Activated T-helper 1 cell treated with anti-CD3 and anti-CD28 coated beads, Interleukin-12 subunit alpha, Interleukin-12 subunit beta, Interleukin-2, Interleukin-4 antibody, amounts not matched to agents 30 ng/mL and 10 ng/mL and 1 ng/mL, durations not matched to agents 14 hours and 24 hours and 36 hours (primary cell): ENCODE measurements at regions of chr11 and their contacts with region 1.

Region 1: DNA sequence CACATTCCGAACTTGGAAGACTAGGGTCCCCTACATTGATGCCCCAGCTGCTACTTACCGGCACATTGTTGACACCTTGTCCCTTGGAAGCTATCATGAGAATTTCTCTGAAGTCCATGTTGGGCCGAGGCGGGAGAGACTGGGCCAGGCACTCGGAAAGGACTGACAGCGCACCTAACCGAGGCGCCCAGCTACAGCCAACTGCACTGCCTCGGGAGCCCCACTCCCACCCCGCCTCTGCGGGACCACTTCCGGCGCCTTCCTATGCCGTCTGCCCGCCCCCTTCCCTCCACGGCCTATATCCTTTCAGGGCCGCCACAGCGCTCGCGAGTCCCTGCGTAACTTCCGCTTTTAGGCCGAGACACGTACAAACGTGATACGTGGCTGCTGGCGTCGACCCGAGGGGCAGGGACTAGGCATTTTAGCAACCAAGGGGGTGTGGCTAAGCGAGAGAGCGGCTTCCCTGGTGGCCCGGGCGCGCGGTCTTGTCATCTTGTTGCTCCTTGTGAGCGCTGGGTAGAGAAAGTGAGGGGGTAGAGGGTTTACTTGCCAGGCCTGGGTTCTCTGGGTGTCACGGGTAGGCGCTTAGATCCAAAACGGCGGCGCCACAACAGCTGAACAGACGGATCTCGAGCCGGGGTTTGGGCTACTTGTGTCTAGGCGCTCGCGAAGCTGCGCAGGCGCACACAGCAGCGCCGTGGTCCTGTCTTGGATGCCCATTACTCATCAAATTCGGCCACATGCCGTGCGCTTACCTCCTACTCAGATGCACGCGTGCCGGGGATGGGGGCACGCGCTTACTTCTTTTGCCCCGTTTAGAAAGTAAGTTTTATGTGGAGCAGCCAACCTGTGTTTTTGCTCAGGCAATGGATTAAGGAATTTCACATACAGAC is at the start of gene SPTY2D1:
- DNase-seq: peak; percentile 97
- H3K4me3 Mint-ChIP-seq: peak within 1 kb of the TSS; percentile 97
- H3K27ac Mint-ChIP-seq: peak within 1 kb of the TSS; percentile 99
- H3K4me1 Mint-ChIP-seq: peaks cover 32% of the 10 kb centered on the region
- H3K27me3 Mint-ChIP-seq: no peaks in the 10 kb centered on the region
- total RNA-seq, gene SPTY2D1: 29.2 and 29.6 TPM in 2 replicates

Region 2: DNA sequence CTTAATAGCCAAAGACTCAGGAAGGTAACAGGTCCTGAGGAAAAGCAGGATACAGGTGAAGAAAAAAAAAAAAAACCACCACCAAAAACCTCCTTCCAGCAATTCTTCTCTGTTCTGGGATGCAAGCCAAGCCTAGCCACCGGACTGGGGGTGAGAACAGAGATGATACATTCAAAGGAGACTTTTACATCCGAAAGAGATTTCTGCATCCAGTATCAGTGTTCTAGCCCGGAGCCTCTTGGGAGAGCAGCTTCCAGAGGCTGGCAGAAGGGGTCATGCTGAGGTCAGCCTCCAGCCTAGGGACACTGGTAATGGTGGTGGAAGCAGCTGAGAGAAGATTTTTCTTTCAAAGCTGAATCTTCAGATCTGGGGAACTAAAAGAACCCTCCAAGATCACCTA is 823.6 kb before region 1 on chr11:
- intact Hi-C with region 1: no loop called
- DNase-seq: no peak
- H3K4me3 Mint-ChIP-seq: no peak overlapping the region
- H3K27ac Mint-ChIP-seq: no peak overlapping the region
- H3K4me1 Mint-ChIP-seq: no peaks in the 10 kb centered on the region
- H3K27me3 Mint-ChIP-seq: no peaks in the 10 kb centered on the region

Region 3: GRCh38 chr11:18012863-18013781 is 621.3 kb before region 1 on chr11 and contains the start of gene SERGEF:
- intact Hi-C with region 1: loop called (anchors 5 kb)
- DNase-seq: peak; percentile 92
- H3K4me3 Mint-ChIP-seq: peak within 1 kb of the TSS; percentile 97
- H3K27ac Mint-ChIP-seq: peak within 1 kb of the TSS; percentile 98
- H3K4me1 Mint-ChIP-seq: peaks cover 44% of the 10 kb centered on the region
- H3K27me3 Mint-ChIP-seq: peaks cover 5% of the 10 kb centered on the region
- total RNA-seq, gene SERGEF: 24.5 and 32.8 TPM in 2 replicates

Region 4: GRCh38 chr11:18383388-18384156 is 250.8 kb before region 1 on chr11:
- intact Hi-C with region 1: loop called (anchors 1 kb)
- DNase-seq: peak; percentile 53
- H3K4me3 Mint-ChIP-seq: peak overlapping the region; percentile 59
- H3K27ac Mint-ChIP-seq: peak overlapping the region; percentile 99
- H3K4me1 Mint-ChIP-seq: peaks cover 38% of the 10 kb centered on the region
- H3K27me3 Mint-ChIP-seq: no peaks in the 10 kb centered on the region

Region 5: DNA sequence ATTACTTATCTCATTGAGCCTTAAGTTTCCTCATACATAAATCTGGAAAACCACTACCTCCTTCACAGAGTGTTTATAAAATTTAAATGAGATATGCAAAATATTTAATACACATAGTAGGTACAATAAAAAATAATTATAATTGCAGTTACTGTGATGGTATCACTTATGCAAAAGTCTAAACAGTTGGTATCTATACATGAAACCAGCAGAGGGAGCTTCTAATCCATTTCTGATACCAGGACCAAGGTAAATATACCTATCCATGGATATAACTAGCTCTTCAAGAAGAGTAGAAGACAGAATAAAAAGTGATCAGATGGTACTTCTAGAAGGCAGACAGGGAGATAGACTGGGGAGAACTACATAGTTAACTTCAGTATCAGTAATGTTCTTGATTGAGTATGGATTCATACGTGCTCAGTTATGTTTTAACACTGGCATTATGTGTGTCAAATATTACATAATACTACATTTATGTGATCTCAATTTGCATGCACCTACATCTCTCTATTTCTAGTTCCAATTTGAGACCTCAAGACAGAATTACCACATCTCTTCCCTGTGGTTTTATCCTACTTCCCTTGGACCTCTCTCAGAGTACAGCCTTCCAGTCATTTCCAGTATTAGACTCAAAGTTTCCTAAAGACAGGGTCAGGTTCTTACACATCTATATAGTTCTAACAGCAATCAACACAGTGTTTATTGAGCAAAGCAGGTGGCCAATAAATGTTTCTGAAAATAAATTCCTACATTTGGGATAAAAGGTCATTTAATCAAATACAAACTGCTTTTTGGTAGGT is 94.0 kb before region 1 on chr11:
- intact Hi-C with region 1: loop called (anchors 1 kb)
- DNase-seq: no peak
- H3K4me3 Mint-ChIP-seq: no peak overlapping the region
- H3K27ac Mint-ChIP-seq: no peak overlapping the region
- H3K4me1 Mint-ChIP-seq: peaks cover 8% of the 10 kb centered on the region
- H3K27me3 Mint-ChIP-seq: no peaks in the 10 kb centered on the region

Region 6: GRCh38 chr11:18615628-18616392 is 18.6 kb before region 1 on chr11:
- intact Hi-C with region 1: loop called (anchors 1 kb)
- DNase-seq: no peak
- H3K4me3 Mint-ChIP-seq: peak overlapping the region; percentile 70
- H3K27ac Mint-ChIP-seq: peak overlapping the region; percentile 87
- H3K4me1 Mint-ChIP-seq: peaks cover 67% of the 10 kb centered on the region
- H3K27me3 Mint-ChIP-seq: no peaks in the 10 kb centered on the region

Region 7: DNA sequence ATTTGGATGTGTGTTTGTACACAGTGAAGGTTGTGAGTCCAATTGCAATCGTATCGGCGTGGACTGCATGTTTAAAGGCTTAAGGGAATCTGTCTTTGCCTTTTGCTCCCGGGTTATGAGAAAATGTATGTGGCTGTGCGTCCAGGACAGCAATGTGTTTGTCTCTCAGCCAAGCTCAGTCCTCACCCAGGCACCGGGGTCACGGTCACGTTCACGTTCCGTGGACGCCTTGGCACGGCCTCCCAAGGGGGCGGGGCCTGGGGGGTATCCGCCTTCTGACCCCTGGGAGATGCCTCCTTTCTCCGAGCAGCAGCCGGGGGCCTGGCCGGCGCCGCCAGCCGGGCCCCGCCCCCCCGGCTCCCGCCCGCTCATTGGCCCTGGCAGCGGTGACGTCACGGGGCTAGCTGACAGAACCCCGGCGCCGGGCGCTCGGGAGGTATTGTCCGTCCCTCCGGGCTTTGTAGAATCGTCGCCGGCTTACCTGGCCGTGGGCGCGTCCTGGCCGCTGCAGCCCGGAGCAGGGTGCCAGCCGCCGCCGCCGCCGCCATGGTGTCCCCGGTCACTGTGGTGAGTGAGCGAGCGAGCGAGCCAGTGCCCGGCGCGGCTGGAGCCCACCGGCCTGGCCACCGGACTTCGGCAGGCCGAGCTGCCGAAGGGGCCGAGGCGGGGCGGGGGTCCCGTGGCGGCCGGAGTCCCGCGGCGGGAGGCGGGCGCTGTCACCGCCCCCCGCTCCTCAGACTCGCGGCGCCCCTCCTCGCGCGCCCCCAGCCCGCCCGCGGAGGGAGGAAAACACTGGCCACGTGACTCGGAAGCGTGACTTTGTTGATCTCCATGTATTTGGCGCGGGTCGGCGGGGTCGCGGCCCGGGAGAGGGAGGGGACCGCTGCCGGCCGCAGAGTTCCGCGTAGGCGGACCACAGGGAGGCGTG is 64.2 kb after region 1 on chr11 and contains the start of gene TMEM86A:
- intact Hi-C with region 1: loop called (anchors 1 kb)
- DNase-seq: peak; percentile 89
- H3K4me3 Mint-ChIP-seq: peak within 1 kb of the TSS; percentile 83
- H3K27ac Mint-ChIP-seq: peak within 1 kb of the TSS; percentile 65
- H3K4me1 Mint-ChIP-seq: peaks cover 25% of the 10 kb centered on the region
- H3K27me3 Mint-ChIP-seq: peaks cover 22% of the 10 kb centered on the region
- total RNA-seq, gene TMEM86A: 0.52 and 0.93 TPM in 2 replicates

Region 8: DNA sequence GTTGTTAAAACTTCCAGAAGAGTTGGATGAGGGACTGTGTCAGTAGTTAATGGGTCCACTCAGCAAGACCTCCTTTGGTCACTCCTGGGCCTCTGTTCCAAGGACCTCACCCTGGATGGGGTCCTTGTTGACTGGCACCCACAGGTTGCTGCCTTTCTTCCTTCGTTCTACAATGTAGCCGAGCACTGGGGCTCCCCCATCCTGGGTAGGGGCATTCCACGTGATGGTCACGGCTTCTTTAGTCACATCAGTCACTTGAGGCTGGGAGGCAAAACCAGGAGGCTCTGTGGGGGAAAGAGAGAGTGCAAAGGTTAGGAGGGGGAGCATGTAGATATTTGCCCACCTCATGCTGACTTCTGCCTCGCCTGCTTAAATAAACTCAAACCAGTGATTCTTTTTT is 76.2 kb after region 1 on chr11:
- intact Hi-C with region 1: no loop called
- DNase-seq: no peak
- H3K4me3 Mint-ChIP-seq: no peak overlapping the region
- H3K27ac Mint-ChIP-seq: no peak overlapping the region
- H3K4me1 Mint-ChIP-seq: peaks cover 12% of the 10 kb centered on the region
- H3K27me3 Mint-ChIP-seq: peaks cover 27% of the 10 kb centered on the region

Region 9: DNA sequence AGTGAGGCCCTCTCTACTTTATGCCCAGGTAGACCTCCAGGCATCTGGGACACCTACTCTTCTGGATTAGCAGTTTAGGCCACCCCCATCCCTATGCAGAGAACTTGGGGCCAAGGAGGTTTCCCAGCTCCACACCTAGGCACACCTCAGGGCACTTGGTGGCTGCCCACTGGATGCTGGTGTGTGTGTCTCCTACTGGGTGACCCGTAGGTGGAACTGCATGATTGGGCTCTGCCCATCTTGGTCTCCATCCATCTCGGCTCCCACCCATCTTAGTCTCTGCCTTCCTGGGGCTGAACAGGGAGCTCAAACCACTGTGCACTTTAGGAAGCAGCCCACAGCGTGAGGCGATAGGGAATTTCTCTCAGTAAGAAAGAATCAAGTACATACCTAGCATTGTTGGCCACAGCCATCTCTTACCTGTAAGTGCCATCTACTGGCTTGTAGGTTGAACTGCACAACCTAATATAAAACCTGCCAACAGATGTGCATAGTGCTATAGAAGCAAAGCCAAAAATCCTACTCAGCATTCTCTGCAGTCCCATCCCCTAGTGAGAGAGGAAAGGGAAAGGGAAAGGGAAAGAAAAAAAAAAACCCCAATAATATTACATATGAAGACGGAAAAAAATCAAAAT is 218.8 kb after region 1 on chr11:
- intact Hi-C with region 1: no loop called
- DNase-seq: no peak
- H3K4me3 Mint-ChIP-seq: no peak overlapping the region
- H3K27ac Mint-ChIP-seq: no peak overlapping the region
- H3K4me1 Mint-ChIP-seq: no peaks in the 10 kb centered on the region
- H3K27me3 Mint-ChIP-seq: peaks cover 18% of the 10 kb centered on the region